Activated naive CD4-positive, alpha-beta T cell treated with anti-CD3 and anti-CD28 coated beads for 36 hours (primary cell): ENCODE measurements at regions of chr18 and their contacts with region 1.

Region 1: GRCh38 chr18:58043491-58044379 is at the start of gene NEDD4L:
- DNase-seq: peak; percentile 89
- H3K4me3 Mint-ChIP-seq: peak within 1 kb of the TSS; percentile 85
- H3K27ac Mint-ChIP-seq: no peak within 1 kb of the TSS
- H3K4me1 Mint-ChIP-seq: peaks cover 25% of the 10 kb centered on the region
- H3K27me3 Mint-ChIP-seq: peaks cover 10% of the 10 kb centered on the region
- total RNA-seq, gene NEDD4L: 5.3 to 5.6 TPM

Region 2: GRCh38 chr18:57881818-57882413 is 161.8 kb before region 1 on chr18:
- CTCF ChIA-PET with region 1: interaction called, 13 read pairs
- intact Hi-C with region 1: loop called (anchors 2 kb)
- DNase-seq: peak; percentile 75
- H3K4me3 Mint-ChIP-seq: no peak overlapping the region
- H3K27ac Mint-ChIP-seq: no peak overlapping the region
- H3K4me1 Mint-ChIP-seq: no peaks in the 10 kb centered on the region
- H3K27me3 Mint-ChIP-seq: peaks cover 20% of the 10 kb centered on the region

Region 3: DNA sequence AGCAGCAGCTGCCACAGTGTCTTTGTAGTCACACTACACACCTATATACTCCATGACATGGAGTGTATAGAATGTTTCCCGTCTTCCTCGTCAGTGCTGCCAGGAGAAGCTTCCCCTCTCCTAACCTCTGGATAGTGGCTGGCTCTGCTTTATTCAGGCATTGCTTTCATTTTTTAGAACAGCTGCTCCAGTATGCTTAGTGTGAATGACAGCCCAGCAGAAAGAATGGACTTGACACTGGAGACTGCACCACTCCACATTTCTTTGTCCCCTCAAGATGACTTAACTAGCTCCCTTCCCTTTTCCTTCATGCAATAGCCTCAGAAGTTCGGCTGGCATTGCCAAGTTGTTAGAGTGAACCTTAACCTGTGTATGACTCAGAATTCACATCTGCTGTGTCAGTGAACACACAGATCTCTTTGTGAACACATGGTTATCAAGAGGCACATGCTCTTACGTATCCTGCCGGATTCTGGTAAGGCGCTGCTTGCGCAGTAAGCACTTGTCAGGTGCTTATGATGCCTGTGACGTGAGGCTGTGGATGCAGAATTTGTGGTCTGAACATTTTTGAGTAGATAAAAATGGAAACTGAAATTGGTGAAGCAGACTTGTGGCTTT is 74.2 kb after region 1 on chr18:
- CTCF ChIA-PET with region 1: interaction called, 21 read pairs
- intact Hi-C with region 1: loop called (anchors 1 kb)
- DNase-seq: peak; percentile 24
- H3K4me3 Mint-ChIP-seq: no peak overlapping the region
- H3K27ac Mint-ChIP-seq: no peak overlapping the region
- H3K4me1 Mint-ChIP-seq: peaks cover 5% of the 10 kb centered on the region
- H3K27me3 Mint-ChIP-seq: no peaks in the 10 kb centered on the region

Region 4: GRCh38 chr18:58180738-58181353 is 137.1 kb after region 1 on chr18:
- CTCF ChIA-PET with region 1: interaction called, 8 read pairs
- intact Hi-C with region 1: loop called (anchors 1 kb)
- DNase-seq: peak; percentile 83
- H3K4me3 Mint-ChIP-seq: no peak overlapping the region
- H3K27ac Mint-ChIP-seq: no peak overlapping the region
- H3K4me1 Mint-ChIP-seq: no peaks in the 10 kb centered on the region
- H3K27me3 Mint-ChIP-seq: no peaks in the 10 kb centered on the region

Region 5: DNA sequence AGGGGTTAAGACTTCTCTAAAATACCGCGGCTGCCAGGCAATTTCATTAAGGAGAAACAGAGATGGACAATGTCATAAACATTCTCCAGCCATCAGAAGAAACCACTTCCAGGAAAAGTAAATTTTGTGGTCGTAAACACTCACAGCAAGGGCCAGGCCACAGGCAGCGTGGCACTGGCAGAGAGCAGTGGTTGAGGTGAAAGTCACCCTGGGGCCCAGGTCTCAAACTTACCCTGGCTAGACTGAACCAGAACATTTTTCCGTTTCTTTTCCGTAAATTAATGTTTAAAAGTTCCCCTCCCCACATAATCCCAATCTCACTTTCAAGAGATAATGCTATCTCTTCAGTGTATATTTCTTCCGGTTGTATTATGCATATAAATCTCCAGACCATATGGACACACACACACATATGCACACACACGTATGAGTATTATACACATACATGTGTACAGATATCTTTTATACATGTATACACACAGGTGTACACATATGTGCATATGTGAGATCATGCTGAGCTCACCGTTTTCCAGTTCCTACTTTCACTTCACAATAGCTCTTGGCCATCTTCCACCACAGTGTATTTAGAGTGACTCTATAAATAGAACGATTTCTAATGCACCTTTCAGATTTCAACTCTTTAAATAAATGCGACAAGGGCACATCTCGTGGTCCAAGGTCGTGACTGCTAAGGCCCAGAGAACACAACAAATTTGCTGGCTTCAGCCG is 717.7 kb after region 1 on chr18:
- CTCF ChIA-PET with region 1: no interaction called
- intact Hi-C with region 1: loop called (anchors 5 kb)
- DNase-seq: no peak
- H3K4me3 Mint-ChIP-seq: no peak overlapping the region
- H3K27ac Mint-ChIP-seq: no peak overlapping the region
- H3K4me1 Mint-ChIP-seq: peaks cover 22% of the 10 kb centered on the region
- H3K27me3 Mint-ChIP-seq: peaks cover 18% of the 10 kb centered on the region